ENCODE measurements at regions of chr4 and their contacts with region 1.

Region 1: DNA sequence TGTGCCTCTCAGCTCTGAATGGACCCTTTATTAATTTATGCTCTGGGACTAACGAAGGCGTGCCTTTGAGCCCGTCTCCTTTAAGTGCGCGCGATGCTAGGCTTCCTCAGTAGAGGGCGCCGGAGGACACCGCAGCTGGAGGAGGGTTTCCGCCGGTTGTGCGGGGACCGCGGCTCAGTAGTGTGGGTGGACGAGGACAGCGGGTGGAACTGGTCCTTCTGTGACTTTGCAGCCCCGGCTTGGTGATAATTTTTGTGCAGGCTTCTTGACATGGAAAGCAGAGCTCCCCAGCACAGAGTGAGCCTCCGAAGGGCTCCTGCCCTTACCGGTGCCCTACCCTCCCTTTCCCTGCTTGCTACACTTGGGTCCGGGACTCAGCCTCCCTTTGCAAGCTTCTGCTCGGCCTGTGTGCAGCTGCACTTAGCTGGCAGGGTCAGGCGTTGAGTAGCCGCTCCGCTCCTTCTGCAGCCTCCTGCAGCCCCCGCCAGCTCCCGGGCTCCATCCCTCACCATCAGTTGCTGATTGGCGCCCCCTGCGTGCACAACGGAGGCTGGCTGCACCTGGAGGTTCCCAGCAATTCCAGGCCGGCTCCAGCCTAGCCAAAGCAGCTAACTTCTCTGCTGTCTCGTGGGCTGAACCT is 26.8 kb upstream of the BOD1L1 start:
- DNase-seq: peak; percentile 62
- H3K4me3 ChIP-seq: peak overlapping the region; percentile 54 to 61 (median 54)
- H3K27ac ChIP-seq: no peak overlapping the region
- H3K4me1 ChIP-seq: peaks cover 18% of the 10 kb centered on the region
- H3K27me3 ChIP-seq: no peaks in the 10 kb centered on the region
- CTCF ChIP-seq: peak; percentile 90 to 96

Region 2: DNA sequence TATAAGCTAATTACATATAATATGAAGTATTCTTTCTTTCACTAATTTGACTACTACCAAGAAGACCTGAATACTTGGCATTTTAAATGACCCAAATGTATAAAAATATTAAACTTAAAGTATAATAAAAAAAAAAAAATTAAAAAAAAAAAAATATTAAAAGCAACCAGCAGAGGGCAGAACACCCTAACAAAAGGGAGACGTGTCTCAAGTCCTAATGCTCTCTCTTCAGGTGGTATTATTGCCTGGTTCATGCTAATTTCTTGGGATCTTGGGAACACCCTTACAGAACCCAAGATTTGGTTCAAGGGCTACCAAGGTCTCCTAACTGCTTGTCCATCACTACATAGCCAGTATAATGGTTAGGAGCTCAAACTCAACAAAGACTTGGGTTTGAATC is 924.9 kb before region 1 on chr4:
- CTCF ChIA-PET with region 1: interaction called, 4 read pairs
- dilution Hi-C with region 1: no loop called
- in situ Hi-C with region 1: no loop called
- intact Hi-C with region 1: loop called (anchors 1 kb)
- DNase-seq: no peak
- H3K4me3 ChIP-seq: no peak overlapping the region
- H3K27ac ChIP-seq: no peak overlapping the region
- H3K4me1 ChIP-seq: no peaks in the 10 kb centered on the region
- H3K27me3 ChIP-seq: no peaks in the 10 kb centered on the region
- CTCF ChIP-seq: peak; percentile 17 to 35

Region 3: GRCh38 chr4:13888112-13888511 is 233.8 kb after region 1 on chr4:
- CTCF ChIA-PET with region 1: no interaction called
- dilution Hi-C with region 1: no loop called
- in situ Hi-C with region 1: loop called in 1 of 2 experiments (anchors 25 kb)
- intact Hi-C with region 1: no loop called
- DNase-seq: peak; percentile 76
- H3K4me3 ChIP-seq: no peak overlapping the region
- H3K27ac ChIP-seq: no peak overlapping the region
- H3K4me1 ChIP-seq: peaks cover 27% of the 10 kb centered on the region
- H3K27me3 ChIP-seq: no peaks in the 10 kb centered on the region
- CTCF ChIP-seq: no peak

Region 4: GRCh38 chr4:13988353-13989305 is 334.4 kb after region 1 on chr4:
- CTCF ChIA-PET with region 1: no interaction called
- dilution Hi-C with region 1: no loop called
- in situ Hi-C with region 1: no loop called
- intact Hi-C with region 1: loop called (anchors 2 kb)
- DNase-seq: peak; percentile 94
- H3K4me3 ChIP-seq: no peak overlapping the region
- H3K27ac ChIP-seq: peak overlapping the region; percentile 79
- H3K4me1 ChIP-seq: peaks cover 36% of the 10 kb centered on the region
- H3K27me3 ChIP-seq: peaks cover 3% of the 10 kb centered on the region
- CTCF ChIP-seq: no peak

Region 5: GRCh38 chr4:14383652-14384051 is 729.4 kb after region 1 on chr4:
- CTCF ChIA-PET with region 1: no interaction called
- dilution Hi-C with region 1: no loop called
- in situ Hi-C with region 1: no loop called
- intact Hi-C with region 1: loop called (anchors 10 kb)
- DNase-seq: no peak
- H3K4me3 ChIP-seq: no peak overlapping the region
- H3K27ac ChIP-seq: no peak overlapping the region
- H3K4me1 ChIP-seq: peaks cover 3% of the 10 kb centered on the region
- H3K27me3 ChIP-seq: no peaks in the 10 kb centered on the region
- CTCF ChIP-seq: no peak

Region 6: DNA sequence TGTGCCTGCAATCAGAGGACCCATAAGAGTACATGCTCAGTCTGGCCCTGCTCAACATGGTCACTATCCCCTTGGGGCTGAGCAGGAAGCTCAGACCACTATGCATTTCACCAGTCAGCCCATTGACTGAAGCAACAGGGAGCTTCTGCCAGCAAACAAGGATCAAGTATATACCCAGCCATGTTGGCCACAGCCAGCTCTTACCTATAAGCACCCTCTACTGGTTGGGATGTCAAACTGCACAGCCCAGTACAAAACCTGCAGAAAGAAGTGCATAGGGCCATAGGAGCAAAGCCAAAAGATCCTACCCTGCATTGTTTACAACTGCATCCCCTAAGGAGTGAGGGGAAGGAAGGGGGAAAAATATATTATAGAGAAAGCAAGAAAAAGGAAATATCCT is 1133.6 kb after region 1 on chr4:
- CTCF ChIA-PET with region 1: no interaction called
- dilution Hi-C with region 1: no loop called
- in situ Hi-C with region 1: no loop called
- intact Hi-C with region 1: loop called (anchors 2 kb)
- DNase-seq: peak; percentile 40
- H3K4me3 ChIP-seq: no peak overlapping the region
- H3K27ac ChIP-seq: no peak overlapping the region
- H3K4me1 ChIP-seq: peaks cover 18% of the 10 kb centered on the region
- H3K27me3 ChIP-seq: no peaks in the 10 kb centered on the region
- CTCF ChIP-seq: peak; percentile 58 to 67

Region 7: DNA sequence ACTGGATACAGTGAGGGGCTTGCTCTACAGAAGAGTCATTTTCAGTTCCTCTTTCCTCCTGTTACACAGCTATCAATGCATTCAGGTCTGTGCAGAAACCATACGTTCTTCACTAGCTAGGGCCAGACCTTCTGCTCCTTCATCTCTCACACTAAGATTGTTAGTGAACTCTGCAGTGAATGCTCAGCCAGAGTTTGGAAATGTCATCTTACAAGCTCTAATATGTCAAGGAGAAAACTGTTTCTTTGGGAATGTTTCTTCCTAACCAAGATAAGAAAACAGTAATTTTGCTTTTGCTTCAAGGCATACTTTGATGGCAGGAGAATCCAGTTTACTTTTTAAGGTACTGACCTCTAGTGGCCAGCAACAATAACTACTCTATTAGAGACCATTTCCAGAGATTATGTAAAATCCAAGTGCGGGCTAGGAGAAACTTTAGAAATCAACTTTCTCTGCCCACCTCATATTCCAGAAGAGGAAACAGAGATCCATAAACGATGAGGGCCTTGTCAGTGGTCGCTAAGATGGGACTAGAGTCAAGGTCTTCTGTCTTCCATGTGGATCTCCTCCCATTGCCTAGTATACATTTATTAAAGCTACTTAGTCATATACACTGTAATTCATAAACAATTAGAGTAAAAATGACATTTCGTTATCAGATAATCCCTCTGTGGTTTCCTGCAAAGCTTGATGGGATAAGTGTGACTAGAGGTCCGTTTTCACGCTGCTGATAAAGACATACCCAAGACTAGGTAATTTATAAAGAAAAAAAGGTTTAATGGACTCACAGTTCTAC is 1803.3 kb after region 1 on chr4:
- CTCF ChIA-PET with region 1: no interaction called
- dilution Hi-C with region 1: no loop called
- in situ Hi-C with region 1: no loop called
- intact Hi-C with region 1: loop called (anchors 10 kb)
- DNase-seq: no peak
- H3K4me3 ChIP-seq: no peak overlapping the region
- H3K27ac ChIP-seq: no peak overlapping the region
- H3K4me1 ChIP-seq: peaks cover 4% of the 10 kb centered on the region
- H3K27me3 ChIP-seq: peaks cover 2% of the 10 kb centered on the region
- CTCF ChIP-seq: peak; percentile 66 to 72